ENCODE measurements at regions of chr7 and their contacts with region 1.

Region 1: GRCh38 chr7:104883718-104884452 is 130.1 kb upstream of the KMT2E start:
- DNase-seq: peak; percentile 87 to 91
- ATAC-seq: peak; percentile 93 to 99
- H3K4me3 ChIP-seq: no peak overlapping the region
- H3K27ac ChIP-seq: 0 out of 6 replicates have a peak overlapping the region, but pooled peaks of 1 of the 2 experiments have one; percentile 14
- H3K4me1 ChIP-seq: 0 out of 3 replicates have a peak, but pooled peaks cover 4% of the 10 kb centered on the region
- CTCF ChIP-seq: peak; percentile 70
- EP300 ChIP-seq: no peak
- POLR2A ChIP-seq: no peak
- RAD21 ChIP-seq: peak; percentile 50 to 65; a peak in 4 of 5 replicates

Region 2: DNA sequence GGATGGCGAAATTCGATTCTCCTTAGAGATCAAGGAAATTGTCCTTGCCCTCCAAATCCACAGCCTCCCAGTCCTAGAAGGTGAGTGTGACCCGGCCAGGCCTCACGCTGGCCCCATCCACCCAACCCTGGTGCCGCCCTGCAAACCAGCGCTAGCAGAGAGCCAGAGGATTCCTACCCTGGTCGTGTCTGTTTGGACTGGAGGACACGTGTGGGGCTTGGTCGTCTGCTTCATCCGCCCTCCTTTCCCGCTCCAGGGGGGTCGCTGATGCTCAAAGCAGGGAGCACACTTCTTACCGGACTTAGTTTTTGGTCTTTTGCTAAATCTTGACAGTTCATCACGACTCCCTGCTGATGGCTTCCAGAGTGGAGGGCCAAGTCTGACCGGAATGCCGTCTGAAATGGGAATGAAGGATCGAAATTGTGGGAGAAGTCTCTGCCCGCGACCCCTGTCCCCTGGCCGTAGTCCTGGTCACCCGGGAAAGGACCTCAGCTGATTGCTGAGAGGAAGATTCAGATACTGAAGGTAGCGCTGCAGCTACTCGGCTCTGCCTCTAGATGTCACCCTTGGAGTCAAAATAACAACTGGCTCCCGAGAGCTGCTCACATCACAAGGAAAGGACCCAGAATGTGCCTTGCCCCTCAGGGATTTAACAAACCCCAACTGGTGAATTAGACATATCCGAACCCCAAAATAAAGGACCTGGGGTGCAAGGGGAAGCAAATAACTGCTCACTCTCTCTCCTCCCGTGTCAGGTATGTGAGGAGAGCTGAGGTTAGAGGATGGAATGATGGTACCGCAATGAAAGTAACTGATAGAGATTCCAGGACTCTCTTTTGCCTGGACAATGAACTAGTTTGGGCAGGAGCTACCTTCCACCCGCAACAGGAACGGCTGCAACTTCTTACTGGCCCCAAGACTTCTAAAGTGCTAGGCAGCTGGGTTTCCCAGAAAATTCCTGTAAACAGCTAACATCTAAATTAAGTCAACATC is 652.5 kb before region 1 on chr7:
- CTCF ChIA-PET with region 1: interaction called, 14 read pairs
- POLR2A ChIA-PET with region 1: no interaction called
- DNase-seq: peak; percentile 56 to 63
- ATAC-seq: peak; percentile 97 to 99
- H3K4me3 ChIP-seq: no peak overlapping the region
- H3K27ac ChIP-seq: no peak overlapping the region
- H3K4me1 ChIP-seq: no peaks in the 10 kb centered on the region
- CTCF ChIP-seq: peak; percentile 73
- EP300 ChIP-seq: no peak
- POLR2A ChIP-seq: no peak
- RAD21 ChIP-seq: peak; percentile 78 to 81

Region 3: GRCh38 chr7:104873346-104873849 is 10.5 kb before region 1 on chr7:
- CTCF ChIA-PET with region 1: interaction called, 25 read pairs
- POLR2A ChIA-PET with region 1: no interaction called
- DNase-seq: no peak
- ATAC-seq: no peak
- H3K4me3 ChIP-seq: no peak overlapping the region
- H3K27ac ChIP-seq: no peak overlapping the region
- H3K4me1 ChIP-seq: no peaks in the 10 kb centered on the region
- CTCF ChIP-seq: no peak
- EP300 ChIP-seq: no peak
- POLR2A ChIP-seq: no peak
- RAD21 ChIP-seq: no peak

Region 4: GRCh38 chr7:104900525-104901239 is 16.8 kb after region 1 on chr7:
- CTCF ChIA-PET with region 1: interaction called, 53 read pairs
- POLR2A ChIA-PET with region 1: no interaction called
- DNase-seq: no peak
- ATAC-seq: no peak; a peak in 1 of 6 replicates
- H3K4me3 ChIP-seq: no peak overlapping the region
- H3K27ac ChIP-seq: no peak overlapping the region
- H3K4me1 ChIP-seq: no peaks in the 10 kb centered on the region
- CTCF ChIP-seq: no peak
- EP300 ChIP-seq: no peak
- POLR2A ChIP-seq: no peak
- RAD21 ChIP-seq: no peak

Region 5: DNA sequence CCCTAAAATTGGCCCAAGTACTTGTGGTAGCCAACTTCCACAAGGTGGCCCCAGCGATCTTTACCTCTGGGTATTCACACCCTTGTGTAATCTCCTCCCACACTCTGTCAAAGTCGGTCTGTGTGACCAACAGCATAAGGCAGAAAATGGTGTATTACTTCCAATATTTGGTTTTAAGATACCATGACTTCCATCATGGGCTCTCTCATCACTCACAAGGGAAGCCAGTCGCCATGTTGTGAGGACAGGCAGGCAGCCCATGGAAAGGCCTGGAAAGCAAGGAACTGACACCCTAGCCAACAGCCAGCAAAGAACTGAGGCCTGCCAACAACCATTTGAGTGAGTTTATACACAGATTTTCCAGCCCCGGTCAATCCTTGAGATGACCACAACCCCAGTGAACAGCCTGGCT is 39.1 kb after region 1 on chr7:
- CTCF ChIA-PET with region 1: interaction called, 66 read pairs
- POLR2A ChIA-PET with region 1: no interaction called
- DNase-seq: peak; percentile 45 to 85
- ATAC-seq: peak; percentile 86 to 94
- H3K4me3 ChIP-seq: no peak overlapping the region
- H3K27ac ChIP-seq: no peak overlapping the region
- H3K4me1 ChIP-seq: no peaks in the 10 kb centered on the region
- CTCF ChIP-seq: peak; percentile 70
- EP300 ChIP-seq: no peak
- POLR2A ChIP-seq: no peak
- RAD21 ChIP-seq: peak; percentile 84 to 94